K562 (cell line): ENCODE measurements at regions of chr6 and their contacts with region 1.

Region 1: GRCh38 chr6:158853072-158853871 is 34.1 kb upstream of the EZR start:
- DNase-seq: peak; percentile 95 to 99 (median 96)
- ATAC-seq: peak; percentile 91
- H3K4me3 ChIP-seq: peak overlapping the region; percentile 24
- H3K27ac ChIP-seq: peak overlapping the region; percentile 89
- H3K4me1 ChIP-seq: peaks cover 29 to 55% of the 10 kb centered on the region in 2 experiments
- H3K27me3 ChIP-seq: no peaks in the 10 kb centered on the region; a peak in 1 of 5 replicates
- CTCF ChIP-seq: no peak
- EP300 ChIP-seq: peak; percentile 98
- POLR2A ChIP-seq: peak; percentile 79
- RAD21 ChIP-seq: peak in 1 of 2 experiments; percentile 36; a peak in 1 of 4 replicates

Region 2: GRCh38 chr6:158560836-158561320 is 292.4 kb before region 1 on chr6:
- CTCF ChIA-PET with region 1: no interaction called
- POLR2A ChIA-PET with region 1: no interaction called
- in situ Hi-C with region 1: no loop called
- intact Hi-C with region 1: no loop called
- DNase-seq: peak in 1 of 4 experiments; percentile 66
- ATAC-seq: peak; percentile 65
- H3K4me3 ChIP-seq: peak overlapping the region; percentile 91
- H3K27ac ChIP-seq: peak overlapping the region; percentile 82
- H3K4me1 ChIP-seq: peaks cover 21 to 37% of the 10 kb centered on the region in 2 experiments
- H3K27me3 ChIP-seq: no peaks in the 10 kb centered on the region
- CTCF ChIP-seq: no peak
- EP300 ChIP-seq: no peak
- POLR2A ChIP-seq: no peak
- RAD21 ChIP-seq: no peak

Region 3: GRCh38 chr6:158817728-158818494 is 35.4 kb before region 1 on chr6:
- CTCF ChIA-PET with region 1: no interaction called
- POLR2A ChIA-PET with region 1: interaction called, 4 read pairs
- in situ Hi-C with region 1: no loop called
- intact Hi-C with region 1: loop called (anchors 1 kb)
- DNase-seq: peak; percentile 85 to 91 (median 87)
- ATAC-seq: peak; percentile 76
- H3K4me3 ChIP-seq: peak overlapping the region; percentile 76
- H3K27ac ChIP-seq: peak overlapping the region; percentile 87
- H3K4me1 ChIP-seq: peaks cover 42 to 48% of the 10 kb centered on the region in 2 experiments
- H3K27me3 ChIP-seq: no peaks in the 10 kb centered on the region
- CTCF ChIP-seq: no peak
- EP300 ChIP-seq: no peak
- POLR2A ChIP-seq: peak; percentile 56
- RAD21 ChIP-seq: 0 out of 4 replicates have a peak, but pooled peaks of 1 of the 2 experiments have one; percentile 8

Region 4: GRCh38 chr6:158879180-158879579 is 25.9 kb after region 1 on chr6:
- CTCF ChIA-PET with region 1: no interaction called
- POLR2A ChIA-PET with region 1: no interaction called
- in situ Hi-C with region 1: no loop called
- intact Hi-C with region 1: loop called (anchors 1 kb)
- DNase-seq: peak in 1 of 4 experiments; percentile 39
- ATAC-seq: no peak
- H3K4me3 ChIP-seq: no peak overlapping the region
- H3K27ac ChIP-seq: no peak overlapping the region
- H3K4me1 ChIP-seq: peaks cover 5 to 22% of the 10 kb centered on the region in 2 experiments; a peak in 4 of 5 replicates
- H3K27me3 ChIP-seq: no peaks in the 10 kb centered on the region
- CTCF ChIP-seq: no peak
- EP300 ChIP-seq: no peak
- POLR2A ChIP-seq: no peak
- RAD21 ChIP-seq: no peak

Region 5: GRCh38 chr6:158894193-158894592 is 40.9 kb after region 1 on chr6:
- CTCF ChIA-PET with region 1: no interaction called
- POLR2A ChIA-PET with region 1: no interaction called
- in situ Hi-C with region 1: no loop called
- intact Hi-C with region 1: no loop called
- DNase-seq: no peak
- ATAC-seq: no peak; the same call in 2 of the 3 replicates
- H3K4me3 ChIP-seq: no peak overlapping the region
- H3K27ac ChIP-seq: no peak overlapping the region
- H3K4me1 ChIP-seq: no peaks in the 10 kb centered on the region
- H3K27me3 ChIP-seq: no peaks in the 10 kb centered on the region
- CTCF ChIP-seq: no peak
- EP300 ChIP-seq: no peak
- POLR2A ChIP-seq: no peak
- RAD21 ChIP-seq: no peak